Sciatic nerve (tissue), 2 donors: ENCODE measurements at regions of chr17 and their contacts with region 1.

Region 1: DNA sequence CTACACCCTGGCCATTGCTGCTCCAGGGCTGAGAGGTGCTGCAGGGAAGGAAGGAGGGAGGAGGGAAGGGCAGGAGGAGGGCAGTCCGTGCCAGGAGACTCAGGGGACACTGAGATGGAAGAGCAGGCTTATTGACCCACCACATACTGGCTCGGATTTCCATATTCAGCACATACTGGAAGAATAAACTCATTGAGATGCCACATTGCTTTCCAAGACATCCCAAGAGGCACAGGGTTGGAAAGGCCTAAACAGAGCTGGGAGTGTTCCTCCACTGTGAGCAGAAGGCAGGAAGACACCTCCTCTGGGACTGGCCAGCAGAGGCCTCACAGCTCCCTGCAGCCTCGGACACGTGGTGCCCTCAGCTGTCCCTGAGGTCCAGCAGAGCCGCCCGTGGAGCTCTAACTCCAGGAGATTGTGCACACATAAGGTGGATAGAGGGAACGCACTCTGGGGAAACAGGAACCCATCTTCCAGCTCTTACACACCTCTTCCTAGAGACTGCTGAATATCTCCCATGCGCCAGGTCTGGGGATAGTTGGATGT is 17.4 kb downstream of the CCDC182 start:
- DNase-seq: no peak
- ATAC-seq: no peak

Region 2: DNA sequence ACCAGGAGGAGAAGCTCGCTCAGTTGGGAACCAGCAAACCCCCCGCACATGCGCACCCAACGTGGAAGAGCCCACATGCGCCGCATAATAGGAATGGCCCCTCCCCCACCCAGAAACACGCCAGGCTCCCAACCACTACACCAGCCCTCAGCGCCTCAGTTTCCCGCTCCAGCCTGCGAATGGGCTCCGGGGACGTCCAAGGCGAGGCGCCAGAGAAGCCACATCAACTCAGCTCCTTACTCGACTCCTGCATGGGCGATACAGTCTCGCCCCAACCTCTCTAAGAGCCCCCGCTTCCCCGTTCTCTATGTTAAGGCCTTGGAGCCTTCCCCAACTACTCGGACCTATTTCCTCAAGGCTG is 278.8 kb after region 1 on chr17:
- intact Hi-C with region 1: no loop called
- DNase-seq: peak; percentile 87
- ATAC-seq: peak; percentile 82

Region 3: DNA sequence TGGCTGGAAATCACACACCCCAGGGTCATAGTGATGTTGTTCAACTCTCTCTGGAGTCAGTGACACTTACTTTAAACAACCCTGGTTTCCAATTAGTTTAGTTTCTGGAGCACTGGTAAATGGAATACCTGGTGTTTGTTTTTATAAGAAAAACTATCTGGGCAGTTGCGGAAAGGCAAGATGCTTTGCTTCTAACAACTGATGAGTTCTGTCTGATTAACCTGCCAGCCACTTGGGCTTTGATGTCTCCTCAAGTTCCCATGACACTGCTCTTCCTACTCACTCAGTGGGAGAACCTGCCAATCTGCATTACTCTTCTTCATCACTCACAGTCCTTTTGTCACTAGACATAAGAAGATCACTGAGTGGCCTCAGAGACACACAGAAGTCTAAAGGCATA is 865.4 kb after region 1 on chr17:
- intact Hi-C with region 1: loop called (anchors 5 kb)
- DNase-seq: no peak
- ATAC-seq: no peak